PC-3 (cell line): ENCODE measurements at regions of chr13 and their contacts with region 1.

Region 1: GRCh38 chr13:90867336-90867683 is 480.2 kb upstream of the MIR17HG start:
- DNase-seq: peak; percentile 86
- ATAC-seq: peak; percentile 73
- H3K4me3 ChIP-seq: no peak overlapping the region
- H3K27ac ChIP-seq: peak overlapping the region; percentile 91
- H3K4me1 ChIP-seq: peaks cover 24% of the 10 kb centered on the region
- H3K27me3 ChIP-seq: no peaks in the 10 kb centered on the region
- CTCF ChIP-seq: peak; percentile 82

Region 2: GRCh38 chr13:90365130-90365529 is 502.2 kb before region 1 on chr13:
- CTCF ChIA-PET with region 1: no interaction called
- POLR2A ChIA-PET with region 1: no interaction called
- intact Hi-C with region 1: loop called (anchors 10 kb)
- DNase-seq: no peak
- ATAC-seq: peak; percentile 33; the same call in 1 of the 2 replicates
- H3K4me3 ChIP-seq: no peak overlapping the region
- H3K27ac ChIP-seq: no peak overlapping the region
- H3K4me1 ChIP-seq: no peaks in the 10 kb centered on the region
- H3K27me3 ChIP-seq: no peaks in the 10 kb centered on the region
- CTCF ChIP-seq: peak; percentile 40; the same call in 1 of the 2 replicates

Region 3: DNA sequence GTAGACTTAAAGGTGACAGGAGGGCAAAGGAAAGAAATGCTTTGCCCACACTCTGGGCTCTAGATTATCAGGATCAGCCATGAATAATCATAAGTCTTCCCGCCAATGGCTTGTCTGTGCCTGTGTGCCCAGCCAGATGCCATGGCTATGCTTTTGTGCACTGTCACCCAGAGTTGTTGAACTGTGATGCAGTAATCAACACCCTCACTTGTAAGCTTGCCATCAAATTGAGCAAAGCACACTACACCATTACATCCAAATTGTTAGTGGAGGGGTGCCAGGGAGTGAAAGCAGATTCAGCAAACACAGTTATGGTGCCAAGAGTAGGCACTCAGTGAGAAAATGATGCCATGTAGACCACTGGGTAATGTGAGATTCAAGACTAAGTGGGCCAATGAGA is 365.2 kb before region 1 on chr13:
- CTCF ChIA-PET with region 1: interaction called, 3 read pairs
- POLR2A ChIA-PET with region 1: no interaction called
- intact Hi-C with region 1: loop called (anchors 2 kb)
- DNase-seq: no peak
- ATAC-seq: no peak
- H3K4me3 ChIP-seq: no peak overlapping the region
- H3K27ac ChIP-seq: no peak overlapping the region
- H3K4me1 ChIP-seq: no peaks in the 10 kb centered on the region
- H3K27me3 ChIP-seq: no peaks in the 10 kb centered on the region
- CTCF ChIP-seq: no peak

Region 4: GRCh38 chr13:90696254-90696653 is 171.1 kb before region 1 on chr13:
- CTCF ChIA-PET with region 1: no interaction called
- POLR2A ChIA-PET with region 1: no interaction called
- intact Hi-C with region 1: loop called (anchors 1 kb)
- DNase-seq: peak; percentile 74
- ATAC-seq: peak; percentile 84
- H3K4me3 ChIP-seq: peak overlapping the region; percentile 54; the same call in 1 of the 2 replicates
- H3K27ac ChIP-seq: peak overlapping the region; percentile 99
- H3K4me1 ChIP-seq: peaks cover 23% of the 10 kb centered on the region
- H3K27me3 ChIP-seq: no peaks in the 10 kb centered on the region
- CTCF ChIP-seq: no peak

Region 5: GRCh38 chr13:90968166-90968904 is 101.0 kb after region 1 on chr13:
- CTCF ChIA-PET with region 1: interaction called, 5 read pairs
- POLR2A ChIA-PET with region 1: no interaction called
- intact Hi-C with region 1: loop called (anchors 1 kb)
- DNase-seq: peak; percentile 65
- ATAC-seq: peak; percentile 96
- H3K4me3 ChIP-seq: no peak overlapping the region
- H3K27ac ChIP-seq: no peak overlapping the region
- H3K4me1 ChIP-seq: no peaks in the 10 kb centered on the region
- H3K27me3 ChIP-seq: no peaks in the 10 kb centered on the region
- CTCF ChIP-seq: peak; percentile 74

Region 6: GRCh38 chr13:90979059-90979458 is 111.7 kb after region 1 on chr13:
- CTCF ChIA-PET with region 1: no interaction called
- POLR2A ChIA-PET with region 1: no interaction called
- intact Hi-C with region 1: no loop called
- DNase-seq: no peak
- ATAC-seq: no peak
- H3K4me3 ChIP-seq: no peak overlapping the region
- H3K27ac ChIP-seq: no peak overlapping the region
- H3K4me1 ChIP-seq: no peaks in the 10 kb centered on the region
- H3K27me3 ChIP-seq: no peaks in the 10 kb centered on the region
- CTCF ChIP-seq: no peak